ENCODE measurements at regions of chr14 and their contacts with region 1.

Region 1: DNA sequence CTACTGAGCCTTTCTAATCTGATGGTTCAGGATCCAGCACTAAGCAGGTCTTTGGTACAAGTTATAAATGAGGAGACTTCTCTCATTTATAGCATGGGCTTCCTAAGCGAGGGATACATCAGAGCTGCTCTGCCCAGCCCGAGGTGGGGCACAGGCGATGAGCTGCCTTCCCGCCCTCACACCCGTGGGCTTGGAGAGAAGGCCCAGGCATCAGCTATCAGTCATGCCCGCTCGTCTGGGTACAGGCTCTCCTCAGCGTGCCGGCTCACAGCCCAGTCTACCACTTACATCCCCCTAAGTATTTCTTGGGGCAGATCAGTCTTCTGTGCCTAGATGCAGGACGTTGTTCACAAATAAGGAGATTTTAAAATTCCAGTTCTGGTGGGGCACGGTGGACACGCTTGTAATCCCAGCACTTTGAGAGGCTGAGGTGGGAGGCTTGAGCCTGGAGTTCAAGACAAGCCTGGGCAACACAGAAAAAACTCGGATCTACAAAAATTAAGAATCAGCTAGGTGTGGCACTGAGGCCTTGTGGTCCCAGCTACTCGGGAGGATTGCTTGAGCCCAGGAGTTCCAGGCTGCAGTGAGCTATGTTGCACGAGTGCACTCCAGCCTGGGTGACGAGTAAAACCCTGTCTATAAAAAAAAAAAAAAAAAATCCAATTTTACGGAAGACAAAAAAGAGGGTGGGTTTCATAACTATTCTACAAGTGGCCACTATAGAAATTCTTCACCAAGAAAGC is 57.0 kb downstream of the CCDC88C start:
- DNase-seq: no peak
- H3K4me3 ChIP-seq: no peak overlapping the region
- H3K27ac ChIP-seq: no peak overlapping the region
- H3K27me3 ChIP-seq: peaks cover 3% of the 10 kb centered on the region
- CTCF ChIP-seq: no peak

Region 2: DNA sequence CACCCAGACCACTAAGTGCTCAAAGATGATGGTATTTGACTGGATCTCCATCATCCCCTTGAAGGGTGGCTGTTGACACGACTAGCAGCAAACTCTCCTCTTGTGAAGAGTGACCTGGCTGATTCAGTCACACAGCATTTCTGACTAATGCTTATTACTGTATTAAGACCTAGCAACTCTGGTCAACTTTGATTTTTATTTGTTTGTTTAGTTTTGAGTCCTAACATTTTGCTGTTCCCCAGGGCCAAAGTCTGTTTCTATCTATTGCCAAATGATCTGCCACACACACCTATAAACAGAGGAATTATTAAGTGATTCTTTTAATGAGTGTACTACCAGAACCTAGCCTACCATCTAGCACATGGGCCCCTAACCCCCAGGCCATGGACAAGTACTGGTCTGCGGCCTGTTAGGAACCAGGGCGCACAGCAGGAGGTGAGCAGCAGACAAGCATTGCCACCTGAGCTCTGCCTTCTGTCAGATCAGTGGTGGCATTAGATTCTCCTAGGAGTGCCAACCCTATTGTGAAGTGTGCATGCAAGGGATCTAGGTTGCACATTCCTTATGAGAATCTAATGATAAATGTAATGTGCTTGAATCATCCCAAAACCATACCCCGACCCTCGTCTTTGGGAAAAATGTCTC is 420.2 kb before region 1 on chr14:
- CTCF ChIA-PET with region 1: no interaction called
- POLR2A ChIA-PET with region 1: no interaction called
- DNase-seq: no peak
- H3K4me3 ChIP-seq: no peak overlapping the region
- H3K27ac ChIP-seq: no peak overlapping the region
- H3K27me3 ChIP-seq: no peaks in the 10 kb centered on the region
- CTCF ChIP-seq: no peak

Region 3: DNA sequence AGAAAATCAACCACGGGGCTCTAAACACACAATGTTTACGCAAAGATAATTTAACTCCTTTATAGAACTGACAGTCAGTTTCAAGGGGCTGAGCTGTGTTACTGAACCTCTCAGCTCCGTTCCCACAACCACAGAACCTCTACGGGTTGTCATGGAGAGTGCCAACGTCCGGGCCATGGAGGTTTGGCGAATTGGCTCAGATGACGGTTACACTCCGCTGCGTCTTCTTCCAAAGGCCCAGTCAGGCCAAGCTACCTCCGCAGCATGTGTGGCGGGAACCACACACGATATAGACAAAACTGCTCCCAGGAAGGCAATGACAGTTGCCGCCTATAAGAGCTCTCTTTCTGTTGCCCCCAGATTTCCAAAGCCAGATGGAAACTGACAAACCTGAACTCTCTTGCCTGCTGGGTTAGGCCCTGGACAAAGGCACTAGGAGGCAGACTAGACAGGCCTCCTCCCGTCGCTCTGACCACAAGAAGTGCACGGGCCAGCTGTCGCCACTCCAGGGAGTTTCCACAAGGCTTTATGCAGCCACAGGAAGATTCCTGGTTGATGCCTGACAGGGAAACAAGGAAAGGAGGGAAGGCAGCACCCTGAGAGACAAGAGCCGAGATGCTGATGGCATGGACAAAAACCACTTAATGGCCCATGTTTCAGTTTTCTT is 26.6 kb after region 1 on chr14:
- CTCF ChIA-PET with region 1: no interaction called
- POLR2A ChIA-PET with region 1: interaction called, 11 read pairs
- DNase-seq: no peak
- H3K4me3 ChIP-seq: no peak overlapping the region
- H3K27ac ChIP-seq: no peak overlapping the region
- H3K27me3 ChIP-seq: peaks cover 3% of the 10 kb centered on the region
- CTCF ChIP-seq: no peak

Region 4: GRCh38 chr14:91681893-91682563 is 321.4 kb after region 1 on chr14:
- CTCF ChIA-PET with region 1: no interaction called
- POLR2A ChIA-PET with region 1: no interaction called
- DNase-seq: no peak
- H3K4me3 ChIP-seq: no peak overlapping the region
- H3K27ac ChIP-seq: no peak overlapping the region
- H3K27me3 ChIP-seq: no peaks in the 10 kb centered on the region
- CTCF ChIP-seq: no peak

Measured in AG04450 (cell line).